Naive thymus-derived CD4-positive, alpha-beta T cell (primary cell): ENCODE measurements at regions of chr17 and their contacts with region 1.

Region 1: DNA sequence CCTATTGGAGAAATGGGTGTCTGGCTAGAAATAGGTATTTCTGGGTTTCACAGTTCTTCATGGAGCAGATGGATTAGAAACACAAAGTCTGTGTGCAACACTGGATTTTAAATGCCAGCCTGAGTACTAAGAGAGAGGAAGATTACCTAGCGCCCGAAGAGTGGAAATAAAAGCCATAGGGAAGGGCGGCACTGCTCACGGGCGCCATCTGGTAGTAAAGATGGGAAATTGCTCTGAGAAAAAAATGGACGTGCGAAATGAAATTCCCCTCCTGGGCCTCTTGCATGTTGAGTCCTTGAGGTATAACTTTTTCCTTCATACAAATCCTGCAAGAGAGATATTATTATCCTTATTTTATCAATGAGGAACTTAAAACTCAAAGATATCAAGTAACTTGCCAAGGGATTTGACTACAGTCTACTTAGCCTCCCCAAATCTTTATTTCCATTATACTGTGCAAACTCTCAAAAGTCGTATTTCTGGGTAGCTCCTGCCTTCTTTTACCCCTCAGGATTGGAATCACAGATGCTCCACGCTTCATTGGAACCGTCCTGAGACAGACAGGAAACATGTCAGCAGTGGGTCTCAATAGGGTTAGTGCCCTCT is 72.8 kb downstream of the MMD start:
- DNase-seq: peak in 7 of 9 donors; percentile 8 to 36 (median 32)
- ATAC-seq: peak; percentile 71
- H3K4me3 ChIP-seq: no peak overlapping the region
- H3K4me3 Mint-ChIP-seq: peak overlapping the region in 6 of 10 donors; percentile 20 to 61 (median 41)
- H3K27ac ChIP-seq: no peak overlapping the region
- H3K27ac Mint-ChIP-seq: peak overlapping the region in 2 of 9 donors; percentile 11 to 53
- H3K4me1 ChIP-seq: peaks cover 0 to 7% of the 10 kb centered on the region in 2 donors
- H3K4me1 Mint-ChIP-seq: peaks cover 0 to 61% (median 7%) of the 10 kb centered on the region in 7 donors
- H3K27me3 ChIP-seq: no peaks in the 10 kb centered on the region
- H3K27me3 Mint-ChIP-seq: peaks cover 0 to 10% (median 7%) of the 10 kb centered on the region in 5 donors

Region 2: DNA sequence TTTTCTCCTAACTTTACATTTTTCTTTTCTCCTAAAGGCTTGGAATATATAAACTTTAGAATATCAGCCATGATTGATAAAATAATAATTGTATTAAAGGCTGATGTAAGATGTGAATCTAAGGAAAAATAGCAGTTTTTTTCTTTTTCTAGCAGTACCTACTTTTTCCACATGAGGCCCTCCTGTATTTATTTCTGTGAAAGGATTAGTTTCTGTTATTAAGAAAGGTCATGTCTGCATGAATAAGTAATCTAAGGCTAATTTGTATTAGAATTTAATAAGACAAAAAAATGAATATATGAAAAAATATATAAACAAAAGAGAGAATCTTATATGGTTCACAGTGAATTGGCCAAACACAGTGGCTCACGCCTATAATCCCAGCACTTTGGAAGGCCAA is 295.0 kb before region 1 on chr17:
- CTCF ChIA-PET with region 1: no interaction called
- POLR2A ChIA-PET with region 1: no interaction called
- intact Hi-C with region 1: loop called in 1 of 2 experiments (anchors 5 kb)
- DNase-seq: no peak
- ATAC-seq: no peak
- H3K4me3 ChIP-seq: no peak overlapping the region
- H3K4me3 Mint-ChIP-seq: no peak overlapping the region
- H3K27ac ChIP-seq: no peak overlapping the region
- H3K27ac Mint-ChIP-seq: no peak overlapping the region
- H3K4me1 ChIP-seq: no peaks in the 10 kb centered on the region
- H3K4me1 Mint-ChIP-seq: no peaks in the 10 kb centered on the region
- H3K27me3 ChIP-seq: no peaks in the 10 kb centered on the region
- H3K27me3 Mint-ChIP-seq: no peaks in the 10 kb centered on the region

Region 3: DNA sequence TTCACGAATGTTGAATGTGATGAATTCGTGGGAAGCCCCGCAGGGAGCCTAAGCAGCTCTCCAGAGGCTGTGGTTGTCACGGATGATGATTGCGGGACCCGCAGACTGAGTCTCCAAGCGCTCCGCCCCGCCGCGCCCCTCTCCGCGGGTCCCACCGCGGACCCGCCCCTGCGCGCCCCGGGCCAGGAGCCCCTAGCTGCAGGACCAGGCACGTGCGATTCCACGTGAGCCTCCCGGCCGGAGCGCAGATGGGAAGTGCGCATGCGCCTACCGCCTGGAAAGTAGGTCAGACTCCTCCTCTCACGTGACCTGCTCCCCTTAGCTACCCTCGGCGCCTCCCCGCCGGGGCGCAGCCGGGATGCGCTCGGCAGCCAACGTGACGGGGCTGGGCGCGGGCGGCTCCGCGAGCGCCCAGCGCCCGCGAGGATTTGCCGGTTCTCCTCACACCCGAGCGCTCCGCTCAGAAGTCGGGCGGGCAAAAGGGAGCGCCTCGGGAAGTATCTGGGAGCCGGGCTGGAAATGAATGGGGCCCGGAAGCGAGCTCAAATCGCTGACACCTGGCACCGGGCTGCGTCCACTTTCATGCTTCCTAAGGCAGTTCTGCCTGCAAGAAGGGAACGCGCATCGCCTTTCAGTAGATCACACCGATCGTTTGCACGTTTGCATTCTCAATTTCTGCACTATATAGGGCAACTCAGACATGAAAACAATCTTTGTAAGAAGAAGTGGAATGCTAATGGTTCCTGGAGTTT is 110.5 kb before region 1 on chr17:
- CTCF ChIA-PET with region 1: no interaction called
- POLR2A ChIA-PET with region 1: no interaction called
- intact Hi-C with region 1: loop called in 1 of 2 experiments (anchors 10 kb)
- DNase-seq: peak; percentile 60 to 81 (median 75)
- ATAC-seq: peak; percentile 92
- H3K4me3 ChIP-seq: peak overlapping the region; percentile 65
- H3K4me3 Mint-ChIP-seq: peak overlapping the region; percentile 84 to 94 (median 86)
- H3K27ac ChIP-seq: peak overlapping the region; percentile 14
- H3K27ac Mint-ChIP-seq: peak overlapping the region in 4 of 9 donors; percentile 16 to 76 (median 56)
- H3K4me1 ChIP-seq: peaks cover 6 to 19% of the 10 kb centered on the region in 2 donors
- H3K4me1 Mint-ChIP-seq: peaks cover 9 to 23% (median 19%) of the 10 kb centered on the region in 7 donors
- H3K27me3 ChIP-seq: no peaks in the 10 kb centered on the region
- H3K27me3 Mint-ChIP-seq: peaks cover 12 to 46% (median 21%) of the 10 kb centered on the region in 5 donors

Region 4: DNA sequence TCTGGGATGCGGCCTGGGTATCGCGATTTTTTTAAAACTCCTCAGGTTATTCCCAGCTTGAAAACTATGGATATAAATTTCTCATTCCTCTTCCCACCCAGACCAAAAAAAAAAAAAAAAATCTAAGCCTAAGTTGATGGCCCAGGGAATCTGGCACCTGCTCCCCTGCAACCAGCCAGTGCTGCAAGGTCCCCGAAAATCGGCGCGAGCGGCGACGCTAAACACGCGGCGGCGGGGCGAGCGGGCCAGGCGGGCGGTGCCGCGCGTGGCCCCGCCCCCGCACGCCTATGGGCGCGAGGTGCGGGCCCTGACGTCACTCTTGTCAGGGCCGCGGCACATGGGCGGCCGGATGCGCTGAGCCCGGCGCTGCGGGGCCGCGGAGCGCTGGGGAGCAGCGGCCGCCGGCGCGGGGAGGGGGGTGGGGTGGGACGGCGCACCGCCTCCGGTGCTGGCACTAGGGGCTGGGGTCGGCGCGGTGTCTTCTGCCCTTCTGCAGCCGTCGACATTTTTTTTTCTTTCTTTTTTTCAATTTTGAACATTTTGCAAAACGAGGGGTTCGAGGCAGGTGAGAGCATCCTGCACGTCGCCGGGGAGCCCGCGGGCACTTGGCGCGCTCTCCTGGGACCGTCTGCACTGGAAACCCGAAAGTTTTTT is 84.1 kb before region 1 on chr17 and contains the start of gene HLF:
- CTCF ChIA-PET with region 1: no interaction called
- POLR2A ChIA-PET with region 1: no interaction called
- intact Hi-C with region 1: loop called in 1 of 2 experiments (anchors 2 kb)
- DNase-seq: peak; percentile 34 to 78 (median 68)
- ATAC-seq: peak; percentile 96
- H3K4me3 ChIP-seq: peak within 1 kb of the TSS; percentile 58
- H3K4me3 Mint-ChIP-seq: peak within 1 kb of the TSS; percentile 74 to 85 (median 80)
- H3K27ac ChIP-seq: no peak within 1 kb of the TSS
- H3K27ac Mint-ChIP-seq: peak within 1 kb of the TSS in 2 of 9 donors; percentile 41 to 49
- H3K4me1 ChIP-seq: peaks cover 15% of the 10 kb centered on the region in 2 donors
- H3K4me1 Mint-ChIP-seq: peaks cover 8 to 37% (median 21%) of the 10 kb centered on the region in 7 donors
- H3K27me3 ChIP-seq: peaks cover 13 to 29% of the 10 kb centered on the region in 2 donors
- H3K27me3 Mint-ChIP-seq: peaks cover 50 to 90% (median 72%) of the 10 kb centered on the region in 5 donors
- total RNA-seq, gene HLF: 0.19 to 2.6 (median 0.48) TPM

Region 5: DNA sequence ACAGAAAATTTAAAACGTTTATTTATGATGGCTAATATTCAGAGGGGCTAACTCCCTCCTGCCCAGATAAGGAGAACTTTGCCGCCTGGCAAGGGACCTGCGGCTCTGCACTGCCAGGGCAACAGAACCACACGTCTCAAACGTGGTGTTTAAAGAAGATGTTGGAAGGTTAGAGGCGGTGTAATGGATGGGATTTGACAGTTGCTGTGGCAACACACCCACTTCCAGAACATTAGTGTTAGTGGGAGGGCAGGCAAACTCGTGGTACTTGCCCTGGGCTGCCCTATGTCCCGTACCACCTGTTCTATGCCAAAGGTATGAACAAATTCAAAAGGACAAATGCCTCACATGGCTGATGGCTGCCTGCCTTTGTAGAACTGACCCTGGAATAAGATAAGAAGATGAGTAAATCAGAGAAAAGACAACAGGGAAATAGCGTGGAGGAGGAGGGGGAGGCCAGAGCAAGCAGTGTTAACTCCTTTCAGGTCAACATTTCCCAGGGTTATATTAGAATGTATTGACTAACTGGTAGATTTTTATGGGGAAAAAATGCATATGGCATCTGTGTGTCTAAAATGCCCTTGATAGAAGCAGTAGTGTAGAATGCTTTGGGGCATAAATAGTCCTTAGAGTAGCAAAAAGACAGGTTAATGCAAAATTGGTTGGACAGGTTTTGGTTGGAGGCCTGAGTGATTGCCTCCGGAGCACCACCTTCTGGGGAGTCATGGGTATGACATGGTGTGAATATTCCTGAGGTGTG is 53.3 kb before region 1 on chr17:
- CTCF ChIA-PET with region 1: no interaction called
- POLR2A ChIA-PET with region 1: no interaction called
- intact Hi-C with region 1: loop called in 1 of 2 experiments (anchors 5 kb)
- DNase-seq: peak; percentile 9 to 60 (median 50)
- ATAC-seq: peak; percentile 86
- H3K4me3 ChIP-seq: no peak overlapping the region
- H3K4me3 Mint-ChIP-seq: no peak overlapping the region
- H3K27ac ChIP-seq: no peak overlapping the region
- H3K27ac Mint-ChIP-seq: no peak overlapping the region
- H3K4me1 ChIP-seq: no peaks in the 10 kb centered on the region
- H3K4me1 Mint-ChIP-seq: peaks cover 0 to 6% (median 0%) of the 10 kb centered on the region in 7 donors
- H3K27me3 ChIP-seq: no peaks in the 10 kb centered on the region
- H3K27me3 Mint-ChIP-seq: peaks cover 0 to 21% (median 9%) of the 10 kb centered on the region in 5 donors

Region 6: GRCh38 chr17:55513885-55514591 is 165.2 kb after region 1 on chr17:
- CTCF ChIA-PET with region 1: interaction called, 4 read pairs
- POLR2A ChIA-PET with region 1: interaction called, 3 read pairs
- intact Hi-C with region 1: loop called (anchors 2 kb)
- DNase-seq: peak; percentile 40 to 73 (median 59)
- ATAC-seq: peak; percentile 78
- H3K4me3 ChIP-seq: no peak overlapping the region
- H3K4me3 Mint-ChIP-seq: no peak overlapping the region
- H3K27ac ChIP-seq: no peak overlapping the region
- H3K27ac Mint-ChIP-seq: no peak overlapping the region
- H3K4me1 ChIP-seq: no peaks in the 10 kb centered on the region
- H3K4me1 Mint-ChIP-seq: peaks cover 0 to 6% (median 0%) of the 10 kb centered on the region in 7 donors
- H3K27me3 ChIP-seq: no peaks in the 10 kb centered on the region
- H3K27me3 Mint-ChIP-seq: peaks cover 0 to 11% (median 8%) of the 10 kb centered on the region in 5 donors